GM18951 (cell line): ENCODE measurements at regions of chr4 and their contacts with region 1.

Region 1: GRCh38 chr4:37603070-37603468 is 83.1 kb downstream of the RELL1 start:
- POLR2A ChIP-seq: no peak

Region 2: DNA sequence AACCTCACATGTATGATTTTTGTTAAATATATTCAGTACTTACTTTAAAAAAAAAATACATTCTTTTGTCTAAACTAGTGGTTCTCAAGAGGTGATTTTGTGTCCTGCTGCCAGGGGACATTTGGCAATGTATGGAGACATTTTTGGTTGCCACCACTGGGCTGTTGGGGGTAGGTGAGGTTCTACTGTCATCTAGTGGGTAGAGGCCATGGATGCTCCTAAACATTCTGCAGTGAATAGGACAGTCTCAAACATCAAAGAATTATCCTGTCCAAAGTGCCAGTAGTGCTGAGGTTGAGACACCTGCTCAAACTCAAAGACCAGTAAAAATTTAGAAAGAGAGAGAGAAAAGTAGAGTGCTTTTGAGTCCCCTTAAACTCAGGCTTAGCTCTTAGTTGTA is 190.5 kb after region 1 on chr4:
- in situ Hi-C with region 1: loop called (anchors 10 kb)
- POLR2A ChIP-seq: no peak

Region 3: GRCh38 chr4:37837446-37837845 is 234.4 kb after region 1 on chr4:
- in situ Hi-C with region 1: no loop called
- POLR2A ChIP-seq: no peak